Caco-2 (cell line): ENCODE measurements at regions of chr15 and their contacts with region 1.

Region 1: GRCh38 chr15:75367913-75368688 is at the start of gene MAN2C1:
- DNase-seq: peak; percentile 98
- H3K4me3 ChIP-seq: peak within 1 kb of the TSS; percentile 61
- H3K4me3 Mint-ChIP-seq: peak within 1 kb of the TSS; percentile 93
- H3K27ac Mint-ChIP-seq: peak within 1 kb of the TSS; percentile 93
- H3K4me1 ChIP-seq: peaks cover 19% of the 10 kb centered on the region
- H3K4me1 Mint-ChIP-seq: peaks cover 13% of the 10 kb centered on the region
- H3K27me3 ChIP-seq: no peaks in the 10 kb centered on the region
- H3K27me3 Mint-ChIP-seq: no peaks in the 10 kb centered on the region
- CTCF ChIP-seq: peak; percentile 53 to 92
- total RNA-seq, gene MAN2C1: 131 and 140 TPM in 2 replicates

Region 2: DNA sequence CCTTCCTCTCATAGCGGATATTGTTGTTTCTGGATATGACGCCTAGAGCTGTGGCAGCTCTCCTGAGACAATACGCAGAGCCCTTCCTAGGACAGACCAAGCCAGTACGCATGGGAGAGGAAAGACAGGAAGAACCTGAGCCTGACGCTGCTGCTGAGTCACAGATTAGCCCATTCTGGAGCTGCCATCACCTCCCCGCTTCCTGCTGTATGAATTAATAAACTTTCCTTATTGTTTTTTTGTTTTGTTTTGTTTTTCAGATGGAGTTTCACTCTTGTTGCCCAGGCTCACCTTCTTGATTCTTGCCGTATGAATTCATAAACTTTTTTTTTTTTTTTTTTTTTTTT is 277.7 kb before region 1 on chr15:
- CTCF ChIA-PET with region 1: no interaction called
- POLR2A ChIA-PET with region 1: no interaction called
- intact Hi-C with region 1: no loop called
- DNase-seq: no peak
- H3K4me3 ChIP-seq: no peak overlapping the region
- H3K4me3 Mint-ChIP-seq: no peak overlapping the region
- H3K27ac Mint-ChIP-seq: no peak overlapping the region
- H3K4me1 ChIP-seq: no peaks in the 10 kb centered on the region
- H3K4me1 Mint-ChIP-seq: no peaks in the 10 kb centered on the region
- H3K27me3 ChIP-seq: no peaks in the 10 kb centered on the region
- H3K27me3 Mint-ChIP-seq: no peaks in the 10 kb centered on the region
- CTCF ChIP-seq: no peak

Region 3: GRCh38 chr15:75342221-75342620 is 25.9 kb before region 1 on chr15:
- CTCF ChIA-PET with region 1: no interaction called
- POLR2A ChIA-PET with region 1: no interaction called
- intact Hi-C with region 1: no loop called
- DNase-seq: no peak
- H3K4me3 ChIP-seq: no peak overlapping the region
- H3K4me3 Mint-ChIP-seq: no peak overlapping the region
- H3K27ac Mint-ChIP-seq: no peak overlapping the region
- H3K4me1 ChIP-seq: no peaks in the 10 kb centered on the region
- H3K4me1 Mint-ChIP-seq: no peaks in the 10 kb centered on the region
- H3K27me3 ChIP-seq: no peaks in the 10 kb centered on the region
- H3K27me3 Mint-ChIP-seq: peaks cover 4% of the 10 kb centered on the region
- CTCF ChIP-seq: no peak

Region 4: DNA sequence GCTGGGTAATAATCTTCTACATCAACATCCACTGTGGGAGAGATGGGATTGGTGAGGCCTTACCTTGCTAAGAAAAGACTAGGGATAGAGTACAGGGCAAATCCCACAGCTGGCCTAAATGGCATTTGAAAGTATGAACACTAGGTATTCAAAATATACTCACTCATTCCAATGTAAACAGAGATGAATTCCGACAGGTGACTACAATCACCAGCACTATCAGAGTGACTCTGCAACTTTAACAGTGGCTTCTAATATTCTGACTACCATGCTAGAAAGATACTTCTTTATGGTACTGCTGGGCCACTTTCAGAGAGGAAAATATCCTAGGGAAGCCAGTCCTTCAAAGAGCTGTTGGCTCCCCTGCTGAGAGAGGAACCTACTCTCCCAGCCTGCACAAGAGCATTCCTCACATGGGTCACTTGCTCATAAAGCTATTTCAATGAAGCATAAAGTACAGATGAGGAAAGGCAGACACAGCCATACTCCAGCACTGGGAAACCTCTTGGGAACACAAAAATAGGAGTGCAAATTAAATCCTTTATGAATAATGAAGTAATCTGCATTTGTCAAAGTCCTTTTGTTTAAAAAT is 21.8 kb after region 1 on chr15:
- CTCF ChIA-PET with region 1: interaction called, 12 read pairs
- POLR2A ChIA-PET with region 1: interaction called, 6 read pairs
- intact Hi-C with region 1: no loop called
- DNase-seq: no peak
- H3K4me3 ChIP-seq: no peak overlapping the region
- H3K4me3 Mint-ChIP-seq: no peak overlapping the region
- H3K27ac Mint-ChIP-seq: peak overlapping the region; percentile 68
- H3K4me1 ChIP-seq: peaks cover 9% of the 10 kb centered on the region; the same call in 1 of the 2 replicates
- H3K4me1 Mint-ChIP-seq: peaks cover 6% of the 10 kb centered on the region
- H3K27me3 ChIP-seq: no peaks in the 10 kb centered on the region
- H3K27me3 Mint-ChIP-seq: no peaks in the 10 kb centered on the region
- CTCF ChIP-seq: no peak

Region 5: DNA sequence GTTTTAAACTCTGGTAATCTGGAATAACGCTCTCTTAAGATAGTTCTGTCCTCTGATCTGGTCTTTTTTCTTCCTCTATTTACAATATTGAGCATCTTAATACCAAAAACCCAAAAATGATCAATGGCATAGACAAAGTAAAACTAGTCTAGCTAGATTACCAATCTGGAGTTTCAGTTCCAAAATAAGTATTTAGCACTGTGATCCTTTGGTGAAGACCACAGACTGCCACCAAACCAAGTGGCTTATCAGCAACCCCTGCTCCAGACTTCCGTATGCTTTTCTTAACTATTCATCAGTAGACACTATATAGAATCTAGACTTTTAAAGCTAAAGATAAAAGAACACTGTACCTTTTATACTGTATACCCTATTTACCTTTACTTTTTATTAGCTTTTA is 35.8 kb after region 1 on chr15:
- CTCF ChIA-PET with region 1: no interaction called
- POLR2A ChIA-PET with region 1: no interaction called
- intact Hi-C with region 1: no loop called
- DNase-seq: no peak
- H3K4me3 ChIP-seq: no peak overlapping the region
- H3K4me3 Mint-ChIP-seq: no peak overlapping the region
- H3K27ac Mint-ChIP-seq: no peak overlapping the region
- H3K4me1 ChIP-seq: no peaks in the 10 kb centered on the region
- H3K4me1 Mint-ChIP-seq: no peaks in the 10 kb centered on the region
- H3K27me3 ChIP-seq: no peaks in the 10 kb centered on the region
- H3K27me3 Mint-ChIP-seq: no peaks in the 10 kb centered on the region
- CTCF ChIP-seq: no peak

Region 6: GRCh38 chr15:75625542-75626347 is 257.6 kb after region 1 on chr15 and contains the start of gene SNUPN:
- CTCF ChIA-PET with region 1: interaction called, 10 read pairs
- POLR2A ChIA-PET with region 1: interaction called, 4 read pairs
- intact Hi-C with region 1: loop called (anchors 1 kb)
- DNase-seq: peak; percentile 84 to 88
- H3K4me3 ChIP-seq: peak within 1 kb of the TSS; percentile 85
- H3K4me3 Mint-ChIP-seq: peak within 1 kb of the TSS; percentile 79
- H3K27ac Mint-ChIP-seq: peak within 1 kb of the TSS; percentile 68
- H3K4me1 ChIP-seq: 0 out of 2 replicates have a peak, but pooled peaks cover 7% of the 10 kb centered on the region
- H3K4me1 Mint-ChIP-seq: no peaks in the 10 kb centered on the region
- H3K27me3 ChIP-seq: no peaks in the 10 kb centered on the region
- H3K27me3 Mint-ChIP-seq: no peaks in the 10 kb centered on the region
- CTCF ChIP-seq: no peak
- total RNA-seq, gene SNUPN: 10.6 and 12.5 TPM in 2 replicates

Region 7: GRCh38 chr15:75647370-75648155 is 279.5 kb after region 1 on chr15 and contains the start of gene SNX33:
- CTCF ChIA-PET with region 1: interaction called, 18 read pairs
- POLR2A ChIA-PET with region 1: no interaction called
- intact Hi-C with region 1: no loop called
- DNase-seq: peak; percentile 88
- H3K4me3 ChIP-seq: peak within 1 kb of the TSS; percentile 66
- H3K4me3 Mint-ChIP-seq: peak within 1 kb of the TSS; percentile 75
- H3K27ac Mint-ChIP-seq: peak within 1 kb of the TSS; percentile 89
- H3K4me1 ChIP-seq: peaks cover 45% of the 10 kb centered on the region
- H3K4me1 Mint-ChIP-seq: peaks cover 24% of the 10 kb centered on the region
- H3K27me3 ChIP-seq: no peaks in the 10 kb centered on the region
- H3K27me3 Mint-ChIP-seq: no peaks in the 10 kb centered on the region
- CTCF ChIP-seq: peak in 1 of 2 experiments; percentile 51
- total RNA-seq, gene SNX33: 17.9 and 19.4 TPM in 2 replicates